GM13976 (cell line): ENCODE measurements at regions of chr12 and their contacts with region 1.

Region 1: GRCh38 chr12:42023733-42024494 is 120.8 kb downstream of the GXYLT1 start:
- DNase-seq: peak; percentile 65
- CTCF ChIP-seq: peak; percentile 93

Region 2: GRCh38 chr12:40946612-40947194 is 1077.2 kb before region 1 on chr12:
- in situ Hi-C with region 1: loop called (anchors 25 kb)
- DNase-seq: peak; percentile 7
- CTCF ChIP-seq: peak; percentile 32

Region 3: GRCh38 chr12:41277116-41277945 is 746.6 kb before region 1 on chr12:
- in situ Hi-C with region 1: loop called (anchors 25 kb)
- DNase-seq: peak; percentile 25
- CTCF ChIP-seq: peak; percentile 45